Activated CD4-positive, alpha-beta memory T cell treated with anti-CD3 and anti-CD28 coated beads, Interleukin-2, amount 10 ng/mL, durations not matched to agents 7 days and 5 days (primary cell): ENCODE measurements at regions of chr15 and their contacts with region 1.

Region 1: GRCh38 chr15:78108299-78109084 is 16.1 kb downstream of the SH2D7 start:
- DNase-seq: peak; percentile 88
- H3K4me3 Mint-ChIP-seq: no peak overlapping the region
- H3K27ac Mint-ChIP-seq: no peak overlapping the region
- H3K4me1 Mint-ChIP-seq: peaks cover 51% of the 10 kb centered on the region
- H3K27me3 Mint-ChIP-seq: no peaks in the 10 kb centered on the region

Region 2: GRCh38 chr15:77907824-77908751 is 200.4 kb before region 1 on chr15:
- CTCF ChIA-PET with region 1: interaction called, 15 read pairs
- POLR2A ChIA-PET with region 1: no interaction called
- DNase-seq: peak; percentile 75
- H3K4me3 Mint-ChIP-seq: no peak overlapping the region
- H3K27ac Mint-ChIP-seq: no peak overlapping the region
- H3K4me1 Mint-ChIP-seq: peaks cover 7% of the 10 kb centered on the region
- H3K27me3 Mint-ChIP-seq: peaks cover 12% of the 10 kb centered on the region

Region 3: DNA sequence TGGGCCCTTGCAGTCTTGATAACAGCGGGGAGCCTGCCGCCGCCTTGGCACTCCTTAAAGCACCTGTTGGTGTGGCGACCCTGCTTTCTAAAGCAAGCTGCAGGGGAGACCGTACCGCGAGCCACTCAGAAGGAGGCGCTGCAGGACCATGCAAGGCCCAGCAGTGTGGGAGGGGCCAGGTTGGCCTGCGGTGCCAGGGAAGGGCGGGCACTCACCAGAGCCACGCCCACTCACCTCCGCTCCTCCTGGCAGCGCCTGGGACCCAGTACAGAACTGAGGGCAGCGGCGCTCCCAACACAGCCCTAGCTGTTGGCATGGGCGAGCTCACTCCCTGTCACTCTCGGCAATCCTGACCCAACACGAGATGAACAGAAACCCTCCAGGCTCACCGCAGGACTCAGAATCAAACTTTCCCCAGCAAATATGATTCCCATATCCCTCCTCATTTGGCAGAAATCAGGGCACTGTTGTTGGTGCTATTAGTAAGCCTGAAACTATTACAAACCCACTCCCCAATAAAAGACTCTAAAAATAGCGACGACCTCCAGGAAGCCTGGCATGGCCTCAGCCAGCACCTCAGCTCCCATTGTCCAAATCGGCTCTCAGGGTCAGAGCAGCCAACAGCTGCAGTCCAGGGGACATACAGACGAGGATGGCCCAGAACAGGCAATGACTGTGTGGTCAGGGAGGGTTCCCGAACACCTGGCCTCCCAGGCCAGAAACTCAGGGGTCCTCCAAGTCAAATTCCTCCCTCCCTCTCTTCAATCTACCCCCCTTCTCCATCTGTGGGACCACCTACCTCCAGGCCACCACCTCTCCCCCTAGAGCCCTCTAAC is 108.2 kb before region 1 on chr15:
- CTCF ChIA-PET with region 1: interaction called, 80 read pairs
- POLR2A ChIA-PET with region 1: interaction called, 4 read pairs
- DNase-seq: peak; percentile 80
- H3K4me3 Mint-ChIP-seq: no peak overlapping the region
- H3K27ac Mint-ChIP-seq: peak overlapping the region; percentile 29
- H3K4me1 Mint-ChIP-seq: peaks cover 16% of the 10 kb centered on the region
- H3K27me3 Mint-ChIP-seq: no peaks in the 10 kb centered on the region

Region 4: GRCh38 chr15:78034495-78035191 is 73.8 kb before region 1 on chr15:
- CTCF ChIA-PET with region 1: interaction called, 36 read pairs
- POLR2A ChIA-PET with region 1: interaction called, 37 read pairs
- DNase-seq: peak; percentile 87
- H3K4me3 Mint-ChIP-seq: peak overlapping the region; percentile 43
- H3K27ac Mint-ChIP-seq: peak overlapping the region; percentile 87
- H3K4me1 Mint-ChIP-seq: peaks cover 92% of the 10 kb centered on the region
- H3K27me3 Mint-ChIP-seq: no peaks in the 10 kb centered on the region

Region 5: DNA sequence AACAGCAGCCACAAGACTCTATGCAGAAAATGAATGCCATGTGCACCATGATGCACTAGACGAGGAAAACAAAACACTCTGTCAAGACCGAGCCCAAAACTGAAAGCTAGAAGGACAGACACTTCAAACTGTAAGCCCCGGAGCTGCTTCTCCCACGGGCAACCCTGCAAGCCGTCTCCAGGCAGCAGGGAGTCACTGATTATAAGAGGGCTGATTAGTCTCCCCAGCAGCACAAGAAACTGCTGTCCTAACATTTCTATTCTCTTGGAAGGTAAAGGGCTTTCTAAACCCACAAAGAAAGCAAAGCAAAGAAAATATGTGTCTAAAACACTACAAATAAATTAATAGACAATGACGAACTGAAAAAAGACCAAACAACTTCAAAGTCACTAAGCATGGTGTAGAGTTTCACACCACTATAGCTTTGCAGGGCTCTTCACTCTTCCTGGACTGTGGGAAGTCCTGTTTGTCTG is 46.5 kb before region 1 on chr15:
- CTCF ChIA-PET with region 1: interaction called, 61 read pairs
- POLR2A ChIA-PET with region 1: interaction called, 24 read pairs
- DNase-seq: no peak
- H3K4me3 Mint-ChIP-seq: peak overlapping the region; percentile 58
- H3K27ac Mint-ChIP-seq: peak overlapping the region; percentile 79
- H3K4me1 Mint-ChIP-seq: peaks cover 39% of the 10 kb centered on the region
- H3K27me3 Mint-ChIP-seq: no peaks in the 10 kb centered on the region

Region 6: GRCh38 chr15:78093242-78094020 is 15.1 kb before region 1 on chr15:
- CTCF ChIA-PET with region 1: interaction called, 22 read pairs
- POLR2A ChIA-PET with region 1: interaction called, 17 read pairs
- DNase-seq: no peak
- H3K4me3 Mint-ChIP-seq: no peak overlapping the region
- H3K27ac Mint-ChIP-seq: no peak overlapping the region
- H3K4me1 Mint-ChIP-seq: peaks cover 31% of the 10 kb centered on the region
- H3K27me3 Mint-ChIP-seq: peaks cover 5% of the 10 kb centered on the region